ENCODE measurements at regions of chr1 and their contacts with region 1.

Region 1: GRCh38 chr1:27662707-27663393 is 9.1 kb downstream of the IFI6 start:
- DNase-seq: peak; percentile 92
- H3K4me3 ChIP-seq: no peak overlapping the region
- H3K27ac ChIP-seq: peak overlapping the region; percentile 18
- H3K4me1 ChIP-seq: no peaks in the 10 kb centered on the region
- H3K27me3 ChIP-seq: no peaks in the 10 kb centered on the region
- CTCF ChIP-seq: peak; percentile 89

Region 2: DNA sequence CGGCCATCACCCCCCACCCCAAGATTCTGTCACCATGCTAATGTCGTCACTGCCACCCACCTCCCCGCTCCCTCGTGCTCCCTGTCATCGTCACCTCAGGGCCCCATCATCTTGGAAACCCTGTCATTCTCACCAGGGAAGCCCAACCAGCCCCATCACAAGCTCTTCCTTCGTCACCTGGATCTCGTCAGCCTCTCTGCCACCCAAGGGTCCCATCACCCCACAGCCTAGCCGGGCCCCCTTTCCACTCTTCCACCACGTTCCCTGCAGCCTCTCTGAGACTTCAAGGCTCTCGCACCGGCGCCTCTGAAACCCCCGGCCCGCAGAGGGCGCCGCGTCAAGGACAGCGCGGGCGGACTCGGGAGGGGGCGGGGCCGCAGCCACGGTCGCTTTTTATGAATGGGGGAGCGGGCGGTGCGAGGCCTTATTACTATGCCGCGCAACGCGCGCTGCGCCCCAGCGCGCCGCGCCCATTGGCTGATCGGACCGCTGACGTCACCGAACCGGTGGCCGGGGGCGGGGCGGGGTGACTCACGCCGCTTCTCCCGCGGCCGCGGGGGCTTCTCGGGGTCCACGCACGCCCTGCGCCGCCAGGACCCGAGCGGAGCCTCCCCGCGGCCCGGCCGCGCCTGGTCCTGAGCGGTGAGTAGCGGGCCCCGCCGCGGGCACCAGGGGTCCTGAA is 270.6 kb before region 1 on chr1 and contains the start of gene GPR3:
- intact Hi-C with region 1: loop called (anchors 5 kb)
- DNase-seq: peak; percentile 93
- H3K4me3 ChIP-seq: peak within 1 kb of the TSS; percentile 58
- H3K27ac ChIP-seq: no peak within 1 kb of the TSS
- H3K4me1 ChIP-seq: peaks cover 5% of the 10 kb centered on the region
- H3K27me3 ChIP-seq: no peaks in the 10 kb centered on the region
- CTCF ChIP-seq: peak; percentile 27
- total RNA-seq, gene GPR3: 0.32 to 0.49 TPM

Region 3: DNA sequence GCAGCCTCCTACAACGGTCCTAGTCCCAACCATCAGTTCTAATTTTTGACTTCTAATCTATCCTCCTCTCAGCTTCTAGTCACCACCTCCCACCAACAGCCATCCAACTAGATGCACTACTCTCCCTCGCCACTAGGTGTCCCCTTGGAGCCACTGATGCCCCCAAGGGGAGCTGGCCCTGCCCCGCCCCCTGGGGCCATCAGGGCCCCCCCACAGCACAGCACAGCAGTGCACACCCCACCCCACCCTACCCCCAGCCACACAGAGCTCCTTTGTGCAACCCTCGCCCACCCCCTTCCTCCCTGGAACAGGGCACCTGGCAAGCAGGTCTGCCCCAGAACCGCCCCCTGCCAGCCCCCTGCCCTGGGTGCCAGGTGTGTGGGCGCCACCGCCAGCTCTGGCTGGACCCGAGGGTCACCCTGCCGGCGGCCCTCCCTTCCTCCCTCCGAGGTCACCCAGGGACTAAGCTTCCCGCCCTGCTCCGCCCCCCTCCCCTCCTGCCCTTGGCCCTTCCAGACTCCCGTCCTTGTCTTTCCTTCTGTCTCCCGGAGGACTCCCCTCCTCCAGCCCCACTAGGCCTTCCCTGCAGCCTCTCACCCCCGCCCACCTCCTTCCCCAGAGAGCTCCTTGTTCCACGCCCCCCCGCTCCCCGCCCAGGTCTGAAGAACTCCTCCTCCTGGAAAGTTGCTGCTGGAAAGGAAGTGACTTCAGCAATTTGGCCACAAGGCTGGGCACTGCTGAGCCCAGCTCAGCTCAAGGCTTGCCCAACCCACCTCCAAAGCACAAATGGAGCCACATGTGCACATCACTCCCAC is 105.9 kb before region 1 on chr1:
- intact Hi-C with region 1: loop called (anchors 5 kb)
- DNase-seq: peak; percentile 96
- H3K4me3 ChIP-seq: no peak overlapping the region
- H3K27ac ChIP-seq: peak overlapping the region; percentile 85
- H3K4me1 ChIP-seq: peaks cover 12% of the 10 kb centered on the region
- H3K27me3 ChIP-seq: no peaks in the 10 kb centered on the region
- CTCF ChIP-seq: peak; percentile 96

Region 4: GRCh38 chr1:27609210-27609555 is 53.7 kb before region 1 on chr1:
- intact Hi-C with region 1: loop called (anchors 2 kb)
- DNase-seq: no peak
- H3K4me3 ChIP-seq: no peak overlapping the region
- H3K27ac ChIP-seq: no peak overlapping the region
- H3K4me1 ChIP-seq: no peaks in the 10 kb centered on the region
- H3K27me3 ChIP-seq: no peaks in the 10 kb centered on the region
- CTCF ChIP-seq: no peak

Measured in colonic mucosa (tissue), 4 donors.